Activated CD8-positive, alpha-beta T cell treated with anti-CD3 and anti-CD28 coated beads for 36 hours (primary cell): ENCODE measurements at regions of chr22 and their contacts with region 1.

Region 1: DNA sequence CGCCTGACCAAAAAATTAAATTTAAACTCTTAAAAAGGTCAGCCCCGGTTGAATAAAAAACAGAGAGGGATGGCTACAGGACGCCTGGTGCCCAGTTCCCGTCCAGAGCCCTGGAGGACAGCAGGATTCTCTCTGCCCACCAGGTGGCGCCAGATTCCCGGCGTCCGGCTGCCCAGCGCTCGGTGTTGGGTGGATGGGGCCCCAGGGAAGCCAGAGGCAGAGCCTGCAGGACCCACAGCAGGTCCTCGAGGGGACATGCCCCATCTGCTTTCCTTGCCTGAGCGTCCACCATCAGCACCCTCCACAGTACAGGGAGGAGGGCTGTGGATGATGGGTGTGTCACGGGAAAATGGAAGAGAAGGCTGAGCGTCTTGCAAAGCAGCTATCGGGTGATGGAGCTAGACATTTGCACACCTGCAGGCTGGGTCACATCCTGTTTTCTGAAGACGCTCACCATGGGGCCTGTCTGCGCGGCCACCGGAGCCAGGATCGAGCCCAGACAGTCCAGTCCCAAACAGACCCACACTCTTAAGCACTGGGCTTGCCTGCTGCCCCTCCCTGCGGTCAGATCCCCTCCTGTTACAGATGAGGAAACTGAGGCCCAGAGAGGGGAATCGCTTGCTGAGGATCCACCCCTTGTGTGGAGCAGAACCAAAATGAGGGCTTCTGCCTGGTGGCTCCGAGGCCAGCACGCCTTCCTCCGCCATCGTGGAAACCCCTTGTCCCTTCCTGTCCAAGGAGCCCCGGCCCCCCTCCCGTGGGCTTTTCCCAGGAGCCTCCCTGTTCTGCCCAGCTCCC is 18.5 kb upstream of the CBX7 start:
- DNase-seq: peak; percentile 87
- ATAC-seq: peak; percentile 79
- H3K4me3 Mint-ChIP-seq: peak overlapping the region; percentile 49
- H3K27ac Mint-ChIP-seq: peak overlapping the region; percentile 70
- H3K4me1 Mint-ChIP-seq: peaks cover 43% of the 10 kb centered on the region
- H3K27me3 Mint-ChIP-seq: no peaks in the 10 kb centered on the region
- CTCF ChIP-seq: peak; percentile 99

Region 2: GRCh38 chr22:38879108-38879729 is 291.8 kb before region 1 on chr22:
- CTCF ChIA-PET with region 1: no interaction called
- POLR2A ChIA-PET with region 1: no interaction called
- intact Hi-C with region 1: no loop called
- DNase-seq: no peak
- ATAC-seq: no peak
- H3K4me3 Mint-ChIP-seq: no peak overlapping the region
- H3K27ac Mint-ChIP-seq: no peak overlapping the region
- H3K4me1 Mint-ChIP-seq: peaks cover 34% of the 10 kb centered on the region
- H3K27me3 Mint-ChIP-seq: no peaks in the 10 kb centered on the region
- CTCF ChIP-seq: no peak

Region 3: GRCh38 chr22:39152511-39153219 is 18.4 kb before region 1 on chr22 and contains the start of gene CBX7:
- CTCF ChIA-PET with region 1: interaction called, 19 read pairs
- POLR2A ChIA-PET with region 1: interaction called, 3 read pairs
- intact Hi-C with region 1: no loop called
- DNase-seq: peak; percentile 91
- ATAC-seq: peak; percentile 78
- H3K4me3 Mint-ChIP-seq: peak within 1 kb of the TSS; percentile 74
- H3K27ac Mint-ChIP-seq: peak within 1 kb of the TSS; percentile 78
- H3K4me1 Mint-ChIP-seq: peaks cover 44% of the 10 kb centered on the region
- H3K27me3 Mint-ChIP-seq: peaks cover 14% of the 10 kb centered on the region
- CTCF ChIP-seq: no peak
- total RNA-seq, gene CBX7: 23.6 to 25.0 TPM

Region 4: DNA sequence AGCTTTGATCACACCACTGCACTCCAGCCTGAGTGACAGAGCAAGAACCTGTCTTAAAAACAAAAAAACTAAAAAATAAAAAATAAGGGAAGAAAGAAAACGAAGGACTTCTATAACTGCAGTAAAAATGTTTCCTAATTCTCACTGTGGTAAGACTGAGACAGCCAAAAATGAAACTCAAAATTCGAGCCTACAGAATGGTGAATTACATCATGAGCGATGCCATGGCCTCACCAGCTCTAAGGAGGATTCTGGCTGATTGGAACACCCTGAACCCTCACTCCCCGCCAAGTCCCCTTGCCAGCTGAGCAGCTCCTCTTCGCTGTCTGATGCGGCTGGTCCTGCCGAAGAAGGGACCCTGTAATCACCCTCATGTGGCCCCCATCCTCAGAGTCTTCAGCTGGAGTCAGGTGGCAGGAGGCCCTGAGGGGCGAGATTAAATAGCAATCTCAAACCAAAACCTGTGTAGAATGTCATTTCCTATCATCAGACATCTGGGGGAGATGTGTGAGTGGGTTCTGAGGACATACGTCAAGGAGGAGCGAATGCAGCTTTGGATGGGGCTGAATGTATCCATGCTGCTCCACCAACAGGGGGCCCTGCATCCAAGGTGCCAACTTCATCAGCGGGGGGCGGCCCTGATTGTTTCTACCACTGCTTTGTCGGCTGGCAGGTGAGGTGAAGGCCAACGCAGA is 44.5 kb after region 1 on chr22:
- CTCF ChIA-PET with region 1: interaction called, 25 read pairs
- POLR2A ChIA-PET with region 1: no interaction called
- intact Hi-C with region 1: no loop called
- DNase-seq: peak; percentile 58
- ATAC-seq: peak; percentile 93
- H3K4me3 Mint-ChIP-seq: no peak overlapping the region
- H3K27ac Mint-ChIP-seq: no peak overlapping the region
- H3K4me1 Mint-ChIP-seq: peaks cover 6% of the 10 kb centered on the region
- H3K27me3 Mint-ChIP-seq: peaks cover 20% of the 10 kb centered on the region
- CTCF ChIP-seq: peak; percentile 47

Region 5: GRCh38 chr22:39236321-39237317 is 65.6 kb after region 1 on chr22:
- CTCF ChIA-PET with region 1: interaction called, 18 read pairs
- POLR2A ChIA-PET with region 1: interaction called, 3 read pairs
- intact Hi-C with region 1: no loop called
- DNase-seq: peak; percentile 82
- ATAC-seq: peak; percentile 55
- H3K4me3 Mint-ChIP-seq: peak overlapping the region; percentile 42
- H3K27ac Mint-ChIP-seq: peak overlapping the region; percentile 40
- H3K4me1 Mint-ChIP-seq: peaks cover 68% of the 10 kb centered on the region
- H3K27me3 Mint-ChIP-seq: peaks cover 23% of the 10 kb centered on the region
- CTCF ChIP-seq: no peak

Region 6: GRCh38 chr22:39259666-39260065 is 88.6 kb after region 1 on chr22:
- CTCF ChIA-PET with region 1: no interaction called
- POLR2A ChIA-PET with region 1: no interaction called
- intact Hi-C with region 1: no loop called
- DNase-seq: no peak
- ATAC-seq: no peak
- H3K4me3 Mint-ChIP-seq: no peak overlapping the region
- H3K27ac Mint-ChIP-seq: no peak overlapping the region
- H3K4me1 Mint-ChIP-seq: peaks cover 15% of the 10 kb centered on the region
- H3K27me3 Mint-ChIP-seq: peaks cover 5% of the 10 kb centered on the region
- CTCF ChIP-seq: no peak

Region 7: DNA sequence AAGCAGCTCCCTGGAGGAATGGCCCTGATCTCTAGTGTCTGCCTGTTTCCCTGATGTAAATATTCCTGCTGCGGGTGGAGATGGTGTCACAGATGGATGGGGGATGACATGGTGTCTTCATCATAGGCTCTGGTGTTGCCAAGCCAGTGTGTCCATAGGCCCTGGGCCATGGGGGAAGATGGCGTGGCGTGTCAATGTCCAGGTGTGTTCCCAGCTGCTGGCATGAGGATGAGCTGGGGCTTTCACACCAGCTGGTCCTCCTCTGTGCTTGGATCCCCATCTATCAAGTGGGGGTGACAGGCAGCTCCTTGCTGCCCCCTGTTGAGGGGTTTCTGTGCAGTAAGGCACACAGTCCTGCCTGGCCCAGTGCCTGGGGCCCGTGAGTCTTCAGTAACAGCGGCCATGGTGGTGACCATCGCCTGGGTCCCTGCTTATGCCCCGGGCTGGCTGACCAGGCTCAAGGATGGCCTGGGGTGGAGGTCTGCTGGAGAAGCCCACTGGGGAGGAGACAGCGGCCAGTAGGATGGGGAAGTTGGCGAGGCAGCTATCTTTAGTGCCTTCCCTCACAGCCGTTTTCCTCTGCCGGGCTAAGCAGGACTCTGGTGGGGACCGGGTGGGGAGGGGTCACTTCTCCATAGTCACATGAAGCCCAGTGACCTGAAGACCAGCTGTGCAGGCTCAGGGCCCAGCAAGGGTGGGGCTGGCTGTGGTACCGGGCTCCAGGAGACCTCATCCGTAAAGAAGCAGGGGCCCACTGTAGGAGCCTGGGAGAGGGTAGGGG is 135.7 kb after region 1 on chr22:
- CTCF ChIA-PET with region 1: interaction called, 135 read pairs
- POLR2A ChIA-PET with region 1: interaction called, 40 read pairs
- intact Hi-C with region 1: loop called (anchors 2 kb)
- DNase-seq: peak; percentile 77
- ATAC-seq: peak; percentile 34
- H3K4me3 Mint-ChIP-seq: no peak overlapping the region
- H3K27ac Mint-ChIP-seq: no peak overlapping the region
- H3K4me1 Mint-ChIP-seq: peaks cover 9% of the 10 kb centered on the region
- H3K27me3 Mint-ChIP-seq: no peaks in the 10 kb centered on the region
- CTCF ChIP-seq: peak; percentile 61

Region 8: GRCh38 chr22:39405346-39406085 is 234.5 kb after region 1 on chr22:
- CTCF ChIA-PET with region 1: no interaction called
- POLR2A ChIA-PET with region 1: no interaction called
- intact Hi-C with region 1: no loop called
- DNase-seq: peak; percentile 66
- ATAC-seq: peak; percentile 82
- H3K4me3 Mint-ChIP-seq: no peak overlapping the region
- H3K27ac Mint-ChIP-seq: no peak overlapping the region
- H3K4me1 Mint-ChIP-seq: peaks cover 65% of the 10 kb centered on the region
- H3K27me3 Mint-ChIP-seq: no peaks in the 10 kb centered on the region
- CTCF ChIP-seq: no peak

Region 9: DNA sequence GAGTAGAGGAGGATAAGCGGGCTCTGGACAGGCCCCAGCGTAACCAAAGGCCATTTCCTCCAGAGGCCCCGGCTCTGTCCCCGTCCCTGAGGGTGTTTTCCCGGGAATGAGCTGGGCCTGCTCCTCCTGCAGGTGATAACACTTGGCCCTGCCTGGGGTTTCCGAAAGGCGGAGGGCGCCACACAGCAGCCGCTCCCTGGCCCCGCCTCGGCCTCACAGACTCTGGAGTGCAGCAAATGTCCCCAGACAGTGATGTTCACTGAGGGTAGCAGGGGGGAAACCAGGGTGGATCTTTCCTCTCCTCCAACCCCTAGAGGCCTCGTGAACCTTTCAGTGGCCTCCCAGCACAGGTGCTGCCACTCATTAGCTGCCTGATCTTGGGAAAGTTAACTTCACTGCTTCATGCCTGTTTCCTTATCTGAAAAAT is 275.3 kb after region 1 on chr22:
- CTCF ChIA-PET with region 1: no interaction called
- POLR2A ChIA-PET with region 1: no interaction called
- intact Hi-C with region 1: no loop called
- DNase-seq: no peak
- ATAC-seq: peak; percentile 47
- H3K4me3 Mint-ChIP-seq: no peak overlapping the region
- H3K27ac Mint-ChIP-seq: peak overlapping the region; percentile 79
- H3K4me1 Mint-ChIP-seq: peaks cover 21% of the 10 kb centered on the region
- H3K27me3 Mint-ChIP-seq: peaks cover 1% of the 10 kb centered on the region
- CTCF ChIP-seq: no peak